ENCODE measurements at regions of chr14 and their contacts with region 1.

Region 1: DNA sequence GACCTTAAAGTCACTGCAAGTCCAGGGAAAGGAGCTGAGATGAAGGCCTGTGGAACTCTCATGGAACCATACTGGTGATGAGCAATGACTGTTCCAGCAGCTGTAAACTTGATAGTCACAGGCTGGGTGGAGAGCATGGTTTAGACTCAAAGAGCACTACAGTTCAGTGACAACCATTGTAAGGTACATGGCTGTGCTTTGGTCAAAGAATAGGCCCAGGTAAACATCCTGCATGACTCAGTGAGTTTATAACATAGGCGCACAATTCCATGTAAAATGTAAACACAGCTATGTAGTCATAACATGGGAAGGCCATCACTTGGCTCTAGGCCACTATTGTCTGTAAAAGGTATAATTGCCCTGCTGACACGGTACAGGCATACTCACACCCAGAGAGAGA is 119.3 kb upstream of the FSCB start:
- DNase-seq: peak; percentile 0
- ATAC-seq: peak; percentile 27; the same call in 1 of the 3 replicates
- H3K4me3 ChIP-seq: no peak overlapping the region
- H3K27ac ChIP-seq: no peak overlapping the region
- H3K4me1 ChIP-seq: no peaks in the 10 kb centered on the region
- H3K27me3 ChIP-seq: no peaks in the 10 kb centered on the region
- CTCF ChIP-seq: no peak
- EP300 ChIP-seq: no peak
- POLR2A ChIP-seq: no peak
- RAD21 ChIP-seq: no peak

Region 2: GRCh38 chr14:44576356-44576755 is 50.1 kb before region 1 on chr14:
- CTCF ChIA-PET with region 1: no interaction called
- POLR2A ChIA-PET with region 1: no interaction called
- in situ Hi-C with region 1: no loop called
- intact Hi-C with region 1: loop called (anchors 1 kb)
- DNase-seq: no peak
- ATAC-seq: no peak
- H3K4me3 ChIP-seq: no peak overlapping the region
- H3K27ac ChIP-seq: no peak overlapping the region
- H3K4me1 ChIP-seq: no peaks in the 10 kb centered on the region
- H3K27me3 ChIP-seq: no peaks in the 10 kb centered on the region
- CTCF ChIP-seq: no peak
- EP300 ChIP-seq: no peak
- POLR2A ChIP-seq: no peak
- RAD21 ChIP-seq: no peak

Region 3: GRCh38 chr14:44609876-44610510 is 16.4 kb before region 1 on chr14:
- CTCF ChIA-PET with region 1: no interaction called
- POLR2A ChIA-PET with region 1: no interaction called
- in situ Hi-C with region 1: no loop called
- intact Hi-C with region 1: no loop called
- DNase-seq: no peak
- ATAC-seq: no peak
- H3K4me3 ChIP-seq: no peak overlapping the region
- H3K27ac ChIP-seq: no peak overlapping the region
- H3K4me1 ChIP-seq: no peaks in the 10 kb centered on the region
- H3K27me3 ChIP-seq: no peaks in the 10 kb centered on the region
- CTCF ChIP-seq: no peak
- EP300 ChIP-seq: no peak
- POLR2A ChIP-seq: no peak
- RAD21 ChIP-seq: no peak

Measured in HepG2 (cell line).